Activated CD4-positive, alpha-beta T cell treated with anti-CD3 and anti-CD28 coated beads, Interleukin-2, amount 10 ng/mL, durations not matched to agents 24 days and 14 days (primary cell): ENCODE measurements at regions of chr12 and their contacts with region 1.

Region 1: DNA sequence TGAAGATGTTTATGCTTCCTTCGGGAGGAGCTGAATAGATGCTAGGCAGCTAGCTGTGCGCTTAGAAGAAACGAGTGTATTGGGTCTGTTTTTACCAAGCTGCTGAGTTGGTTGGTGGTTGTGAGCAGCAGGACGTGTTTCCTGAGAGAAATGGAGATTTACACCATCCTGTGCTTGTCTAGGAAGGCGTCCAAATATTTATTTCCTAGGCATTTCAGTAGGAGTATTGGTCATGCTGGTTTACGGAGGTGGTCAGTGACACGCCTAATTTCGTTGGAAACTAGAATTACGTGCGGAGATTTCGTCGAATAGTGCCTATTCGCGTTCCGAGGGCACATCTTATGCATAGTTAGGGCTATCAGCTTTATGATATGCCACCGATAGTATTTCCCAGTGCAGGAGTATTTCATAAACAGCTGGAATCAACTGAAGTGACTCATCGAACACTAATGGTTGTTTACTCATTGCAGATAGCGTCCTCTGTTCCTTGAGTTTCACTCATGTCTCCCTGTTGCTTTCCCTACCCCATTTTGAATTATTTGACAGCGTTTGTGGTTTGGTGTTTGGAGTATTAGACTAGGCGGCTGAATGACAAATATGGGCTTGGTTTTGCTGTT is 780 bp downstream of the TBC1D15 start:
- DNase-seq: peak; percentile 78
- H3K4me3 Mint-ChIP-seq: peak overlapping the region; percentile 98
- H3K27ac Mint-ChIP-seq: peak overlapping the region; percentile 94
- H3K4me1 Mint-ChIP-seq: peaks cover 34% of the 10 kb centered on the region
- H3K27me3 Mint-ChIP-seq: no peaks in the 10 kb centered on the region

Region 2: GRCh38 chr12:71551529-71551928 is 288.8 kb before region 1 on chr12:
- intact Hi-C with region 1: no loop called
- DNase-seq: no peak
- H3K4me3 Mint-ChIP-seq: no peak overlapping the region
- H3K27ac Mint-ChIP-seq: no peak overlapping the region
- H3K4me1 Mint-ChIP-seq: no peaks in the 10 kb centered on the region
- H3K27me3 Mint-ChIP-seq: no peaks in the 10 kb centered on the region

Region 3: DNA sequence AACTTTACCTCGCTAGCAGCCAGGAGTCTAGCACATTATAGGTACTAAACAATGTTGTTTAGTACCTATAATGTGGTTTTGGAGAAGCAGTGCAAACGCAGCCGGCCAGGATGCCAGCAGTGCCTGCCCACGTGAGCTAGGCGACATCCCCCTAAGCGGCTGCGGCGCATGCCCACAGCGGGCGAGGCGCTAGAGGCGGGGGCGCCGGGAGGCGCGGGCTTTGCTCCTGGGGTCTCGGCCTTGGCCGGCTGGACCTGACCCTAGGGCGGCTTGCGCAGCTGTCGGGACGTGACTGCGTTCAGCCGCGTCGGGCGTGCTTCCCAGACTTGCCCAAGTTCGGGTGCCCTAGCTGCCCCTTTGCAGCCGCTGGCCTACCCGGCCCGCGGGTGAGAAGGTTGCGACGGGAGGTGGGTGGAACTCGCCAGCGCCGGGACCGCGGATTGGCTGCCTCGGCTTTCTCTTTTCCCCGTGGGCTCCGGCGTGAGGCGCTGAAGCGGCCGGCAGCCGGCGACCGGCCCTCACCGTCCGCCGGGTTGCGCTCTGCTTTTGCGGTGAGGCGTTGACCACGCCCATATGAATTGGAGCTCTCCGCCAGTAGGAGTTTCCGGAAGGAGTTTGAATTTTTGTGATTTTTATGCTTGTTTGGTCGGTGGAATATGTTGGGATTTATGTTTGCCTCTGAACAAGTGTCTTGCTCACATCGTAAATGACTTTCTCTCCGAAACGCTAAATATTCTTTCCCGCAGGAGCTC is 154.2 kb before region 1 on chr12 and contains the start of gene TMEM19:
- intact Hi-C with region 1: loop called (anchors 1 kb)
- DNase-seq: peak; percentile 94
- H3K4me3 Mint-ChIP-seq: peak within 1 kb of the TSS; percentile 92
- H3K27ac Mint-ChIP-seq: peak within 1 kb of the TSS; percentile 95
- H3K4me1 Mint-ChIP-seq: peaks cover 12% of the 10 kb centered on the region
- H3K27me3 Mint-ChIP-seq: no peaks in the 10 kb centered on the region
- total RNA-seq, gene TMEM19: 10.2 and 13.5 TPM in 2 replicates

Region 4: DNA sequence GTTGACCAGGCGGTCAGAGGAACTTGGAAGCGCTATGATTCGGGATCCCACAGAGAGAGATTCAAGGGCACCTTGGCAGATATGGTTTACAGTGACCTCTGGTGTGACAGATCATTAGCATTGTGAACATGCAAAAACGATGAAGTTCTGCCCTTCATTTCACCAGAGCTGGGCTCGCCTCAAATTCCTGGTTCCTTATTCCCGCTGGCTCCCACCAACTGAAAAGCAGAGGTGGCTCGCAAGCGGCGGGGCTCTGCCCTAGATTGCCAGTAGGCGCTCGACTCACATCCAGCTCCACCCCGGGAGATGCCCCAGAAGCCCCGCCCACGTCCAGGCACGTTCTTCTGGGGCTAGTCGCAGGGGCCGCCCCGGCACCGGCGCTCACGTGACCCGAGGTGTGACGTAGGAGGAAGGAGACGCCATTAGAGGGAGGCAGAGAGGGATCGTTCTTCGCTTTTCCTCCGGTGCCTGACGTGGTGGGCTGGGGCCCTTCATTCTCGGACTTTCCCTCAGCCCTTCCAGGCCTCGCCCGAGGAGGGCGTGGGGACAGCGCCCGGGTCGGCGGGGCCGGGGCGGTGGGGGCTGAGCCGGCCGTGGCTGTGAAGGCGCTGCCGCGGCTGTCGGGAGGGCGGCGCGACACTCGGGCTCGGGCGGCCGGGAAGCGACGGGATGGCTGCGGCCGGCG is 85.7 kb before region 1 on chr12 and contains the start of gene RAB21:
- intact Hi-C with region 1: loop called (anchors 1 kb)
- DNase-seq: peak; percentile 99
- H3K4me3 Mint-ChIP-seq: peak within 1 kb of the TSS; percentile 93
- H3K27ac Mint-ChIP-seq: peak within 1 kb of the TSS; percentile 97
- H3K4me1 Mint-ChIP-seq: peaks cover 23% of the 10 kb centered on the region
- H3K27me3 Mint-ChIP-seq: peaks cover 25% of the 10 kb centered on the region
- total RNA-seq, gene RAB21: 91.7 and 92.4 TPM in 2 replicates

Region 5: DNA sequence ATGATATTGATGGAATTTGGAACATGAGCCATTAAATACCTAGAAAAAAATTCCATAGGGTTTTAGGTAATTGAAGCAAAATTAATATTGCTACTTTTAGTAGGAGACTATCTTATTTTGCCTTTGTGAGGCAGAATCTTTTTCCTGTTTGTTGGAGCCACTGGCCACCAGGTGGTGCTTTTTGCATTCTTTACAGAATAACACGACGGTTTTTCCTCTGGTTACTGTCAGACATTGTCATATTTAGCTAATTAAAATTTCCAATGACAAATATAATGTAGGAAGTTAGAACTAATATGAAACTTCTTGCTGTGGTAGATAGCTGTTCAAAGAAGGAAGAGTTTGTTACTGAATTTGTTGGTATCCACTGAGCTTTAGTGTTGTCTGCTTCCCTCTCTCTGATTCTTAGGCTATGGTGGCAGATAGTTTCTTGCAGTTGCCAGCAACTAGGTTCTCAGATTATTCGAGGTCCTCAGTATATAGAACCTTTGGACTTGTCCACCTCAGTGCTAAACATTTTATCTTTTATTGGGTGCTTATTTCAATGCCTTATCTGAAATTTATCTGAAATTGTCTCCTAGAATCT is 60.0 kb before region 1 on chr12:
- intact Hi-C with region 1: loop called (anchors 2 kb)
- DNase-seq: peak; percentile 80
- H3K4me3 Mint-ChIP-seq: no peak overlapping the region
- H3K27ac Mint-ChIP-seq: no peak overlapping the region
- H3K4me1 Mint-ChIP-seq: peaks cover 3% of the 10 kb centered on the region
- H3K27me3 Mint-ChIP-seq: no peaks in the 10 kb centered on the region

Region 6: DNA sequence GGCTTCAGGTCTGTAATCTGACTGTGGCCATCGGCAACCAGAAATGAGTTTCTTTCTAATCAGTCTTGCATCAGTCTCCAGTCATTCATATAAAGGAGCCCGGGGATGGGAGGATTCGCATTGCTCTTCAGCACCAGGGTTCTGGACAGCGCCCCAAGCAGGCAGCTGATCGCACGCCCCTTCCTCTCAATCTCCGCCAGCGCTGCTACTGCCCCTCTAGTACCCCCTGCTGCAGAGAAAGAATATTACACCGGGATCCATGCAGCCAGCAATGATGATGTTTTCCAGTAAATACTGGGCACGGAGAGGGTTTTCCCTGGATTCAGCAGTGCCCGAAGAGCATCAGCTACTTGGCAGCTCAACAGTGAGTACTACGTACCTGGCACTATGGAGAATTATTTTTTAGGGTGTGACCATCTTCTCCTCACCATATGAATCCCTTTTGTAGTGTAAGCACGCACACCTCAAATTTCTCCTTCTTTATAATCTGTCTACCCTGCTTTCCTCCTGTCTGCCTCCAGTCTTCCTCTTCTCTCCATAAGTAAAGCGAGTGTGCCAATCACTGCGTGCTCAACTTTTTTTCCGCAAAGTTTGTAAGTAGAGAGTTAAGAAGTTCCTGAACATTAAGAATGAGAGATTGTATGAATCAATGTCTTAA is 98.5 kb after region 1 on chr12 and contains the start of gene TPH2:
- intact Hi-C with region 1: loop called (anchors 2 kb)
- DNase-seq: peak; percentile 88
- H3K4me3 Mint-ChIP-seq: no peak within 1 kb of the TSS
- H3K27ac Mint-ChIP-seq: no peak within 1 kb of the TSS
- H3K4me1 Mint-ChIP-seq: peaks cover 10% of the 10 kb centered on the region
- H3K27me3 Mint-ChIP-seq: peaks cover 40% of the 10 kb centered on the region
- total RNA-seq, gene TPH2: not detected in 2 replicates